ENCODE measurements at regions of chr12 and their contacts with region 1.

Region 1: DNA sequence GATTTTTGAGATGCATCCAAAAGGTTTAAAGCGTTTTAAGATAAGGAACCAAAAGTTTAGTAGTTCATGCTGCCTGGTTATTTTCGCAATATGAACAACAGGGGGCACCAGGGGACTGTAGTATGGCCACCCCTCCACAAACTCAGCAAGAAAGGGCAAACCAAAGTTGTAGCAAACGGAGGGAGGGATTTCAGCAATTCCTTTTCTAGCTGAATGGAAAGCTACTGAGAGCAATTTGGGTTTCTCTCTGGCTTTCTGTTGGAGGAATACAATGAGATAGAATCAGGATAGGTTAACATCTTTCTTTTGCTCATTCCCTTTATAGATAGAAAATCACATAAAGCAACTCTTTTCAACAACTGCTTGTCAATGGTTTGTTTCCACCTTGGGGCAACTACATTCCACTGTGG is 62.5 kb downstream of the DRAM1 start:
- DNase-seq: peak; percentile 51
- ATAC-seq: peak; percentile 93
- H3K4me3 ChIP-seq: no peak overlapping the region
- H3K27ac ChIP-seq: no peak overlapping the region
- H3K4me1 ChIP-seq: no peaks in the 10 kb centered on the region
- H3K27me3 ChIP-seq: peaks cover 38% of the 10 kb centered on the region
- CTCF ChIP-seq: peak; percentile 78 to 84 (median 82)
- POLR2A ChIP-seq: no peak
- RAD21 ChIP-seq: peak; percentile 95

Region 2: DNA sequence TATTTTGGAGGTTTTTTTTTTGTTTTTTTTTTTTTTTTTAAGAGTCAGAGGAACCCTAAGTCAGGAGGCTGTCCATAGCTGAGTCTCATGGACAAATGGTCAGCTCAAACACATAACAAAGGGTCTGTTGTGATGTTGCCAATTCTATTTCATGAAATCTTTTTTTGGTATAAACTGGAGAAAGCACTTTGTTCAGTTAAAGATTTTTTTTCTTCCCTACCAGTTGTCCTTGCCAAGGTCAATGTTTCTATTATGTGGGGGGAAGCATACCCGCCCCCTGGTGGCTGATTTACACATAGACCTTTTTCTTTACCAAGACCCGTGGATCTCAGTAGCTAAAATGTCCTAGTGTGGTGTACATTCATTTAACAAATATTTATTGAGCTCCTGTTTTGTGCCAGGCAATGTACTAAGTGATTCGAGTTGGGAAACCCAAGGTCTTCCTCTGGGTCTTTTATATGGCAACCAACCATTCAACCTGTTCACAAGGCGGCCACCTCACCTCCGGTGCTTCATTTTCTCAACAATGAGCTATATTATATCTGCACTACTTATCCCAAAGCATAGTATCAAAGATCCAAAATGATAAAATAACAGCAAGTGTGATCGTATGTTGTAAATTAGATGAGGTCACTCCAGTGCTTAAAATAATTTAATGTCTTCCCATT is 762.7 kb after region 1 on chr12:
- CTCF ChIA-PET with region 1: interaction called, 11 read pairs
- POLR2A ChIA-PET with region 1: no interaction called
- RAD21 ChIA-PET with region 1: no interaction called
- intact Hi-C with region 1: loop called (anchors 1 kb)
- DNase-seq: peak; percentile 36
- ATAC-seq: peak; percentile 78
- H3K4me3 ChIP-seq: no peak overlapping the region
- H3K27ac ChIP-seq: no peak overlapping the region
- H3K4me1 ChIP-seq: no peaks in the 10 kb centered on the region
- H3K27me3 ChIP-seq: peaks cover 9% of the 10 kb centered on the region
- CTCF ChIP-seq: peak; percentile 55 to 81 (median 65); a peak in 5 of 6 replicates
- POLR2A ChIP-seq: no peak
- RAD21 ChIP-seq: peak; percentile 57

Region 3: GRCh38 chr12:102740141-102740955 is 800.5 kb after region 1 on chr12:
- CTCF ChIA-PET with region 1: interaction called, 12 read pairs
- POLR2A ChIA-PET with region 1: no interaction called
- RAD21 ChIA-PET with region 1: no interaction called
- intact Hi-C with region 1: loop called (anchors 1 kb)
- DNase-seq: peak; percentile 13
- ATAC-seq: peak; percentile 52
- H3K4me3 ChIP-seq: no peak overlapping the region
- H3K27ac ChIP-seq: no peak overlapping the region
- H3K4me1 ChIP-seq: no peaks in the 10 kb centered on the region
- H3K27me3 ChIP-seq: 0 out of 2 replicates have a peak, but pooled peaks cover 4% of the 10 kb centered on the region
- CTCF ChIP-seq: peak; percentile 6 to 44 (median 37); a peak in 4 of 6 replicates
- POLR2A ChIP-seq: no peak
- RAD21 ChIP-seq: peak; percentile 53

Region 4: DNA sequence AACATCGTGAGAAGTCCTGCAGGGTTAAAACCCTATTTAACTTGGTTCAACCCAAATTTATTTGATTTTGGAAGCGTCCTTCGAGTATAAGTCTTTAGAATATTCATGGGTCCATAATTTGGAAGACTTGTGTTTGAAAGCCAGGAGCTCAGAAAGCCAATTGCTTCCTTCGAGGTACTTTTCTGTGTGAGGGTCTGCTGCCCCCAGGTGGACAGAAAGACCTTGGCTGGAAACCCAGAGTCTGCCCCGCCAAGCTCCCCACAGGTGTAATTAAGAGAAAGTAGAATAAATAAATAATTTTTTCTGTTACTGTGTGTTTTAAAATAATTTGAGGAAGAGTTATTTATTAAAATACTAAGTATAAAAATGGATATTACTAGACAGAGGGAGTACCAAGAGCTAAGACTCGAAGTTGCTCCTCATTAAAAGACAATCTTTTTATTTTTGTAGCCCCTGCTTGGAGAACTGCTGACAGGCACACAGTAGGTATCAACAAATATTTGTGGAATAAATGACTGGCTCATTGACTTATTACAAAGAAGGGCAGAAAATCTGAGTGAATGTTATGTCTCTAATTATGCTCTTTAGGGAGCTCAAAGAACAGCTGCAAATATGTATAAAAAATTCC is 871.4 kb after region 1 on chr12:
- CTCF ChIA-PET with region 1: interaction called, 5 read pairs
- POLR2A ChIA-PET with region 1: no interaction called
- RAD21 ChIA-PET with region 1: no interaction called
- intact Hi-C with region 1: loop called (anchors 2 kb)
- DNase-seq: peak; percentile 12
- ATAC-seq: peak; percentile 64
- H3K4me3 ChIP-seq: no peak overlapping the region
- H3K27ac ChIP-seq: no peak overlapping the region
- H3K4me1 ChIP-seq: peaks cover 0 to 6% of the 10 kb centered on the region in 2 experiments; a peak in 1 of 4 replicates
- H3K27me3 ChIP-seq: peaks cover 8% of the 10 kb centered on the region; the same call in 1 of the 2 replicates
- CTCF ChIP-seq: peak; percentile 33 to 73 (median 59); a peak in 5 of 6 replicates
- POLR2A ChIP-seq: no peak
- RAD21 ChIP-seq: peak; percentile 66

Region 5: GRCh38 chr12:102879144-102879763 is 939.4 kb after region 1 on chr12:
- CTCF ChIA-PET with region 1: no interaction called
- POLR2A ChIA-PET with region 1: no interaction called
- RAD21 ChIA-PET with region 1: no interaction called
- intact Hi-C with region 1: loop called (anchors 1 kb)
- DNase-seq: peak; percentile 76
- ATAC-seq: peak; percentile 88
- H3K4me3 ChIP-seq: no peak overlapping the region
- H3K27ac ChIP-seq: no peak overlapping the region
- H3K4me1 ChIP-seq: 0 out of 4 replicates have a peak, but pooled peaks cover 0 to 3% of the 10 kb centered on the region in 2 experiments
- H3K27me3 ChIP-seq: peaks cover 13% of the 10 kb centered on the region; the same call in 1 of the 2 replicates
- CTCF ChIP-seq: peak; percentile 54 to 95 (median 62)
- POLR2A ChIP-seq: no peak
- RAD21 ChIP-seq: peak; percentile 85

Measured in HCT116 (cell line).